Endothelial cell of umbilical vein (primary cell): ENCODE measurements at regions of chr2 and their contacts with region 1.

Region 1: DNA sequence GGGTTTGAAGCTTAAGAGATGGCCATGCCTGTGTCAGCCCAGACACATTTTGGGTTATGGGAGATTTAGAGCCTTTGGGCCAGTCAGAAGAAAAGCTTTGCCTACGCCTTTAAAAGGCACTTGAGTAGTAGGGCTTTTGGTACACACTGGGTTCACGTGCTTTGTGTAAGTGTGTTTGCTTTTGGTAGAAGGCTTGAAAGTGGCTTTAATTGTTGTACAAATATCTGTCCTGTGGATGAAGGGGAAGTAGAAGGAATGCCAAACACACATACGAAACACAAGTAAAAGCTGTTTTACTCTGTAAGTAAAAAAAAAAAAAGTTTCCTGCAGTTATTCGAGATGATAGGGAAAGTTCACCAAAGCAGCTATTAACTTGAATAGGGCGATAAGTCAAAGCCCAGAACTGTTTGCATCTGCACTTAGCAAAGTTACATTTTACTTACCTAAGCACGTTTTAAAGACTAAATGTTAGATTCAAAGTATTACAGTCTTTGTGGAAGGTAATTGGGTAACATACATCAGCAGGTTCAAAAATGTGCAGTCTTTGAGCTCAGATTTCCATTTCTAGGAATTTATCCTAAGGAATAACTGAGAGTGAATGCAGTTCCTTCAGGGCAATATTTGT is 75.4 kb downstream of the STK25 start:
- DNase-seq: no peak
- H3K4me3 ChIP-seq: no peak overlapping the region
- H3K27ac ChIP-seq: no peak overlapping the region
- H3K4me1 ChIP-seq: no peaks in the 10 kb centered on the region
- H3K27me3 ChIP-seq: no peaks in the 10 kb centered on the region
- CTCF ChIP-seq: no peak
- POLR2A ChIP-seq: no peak

Region 2: DNA sequence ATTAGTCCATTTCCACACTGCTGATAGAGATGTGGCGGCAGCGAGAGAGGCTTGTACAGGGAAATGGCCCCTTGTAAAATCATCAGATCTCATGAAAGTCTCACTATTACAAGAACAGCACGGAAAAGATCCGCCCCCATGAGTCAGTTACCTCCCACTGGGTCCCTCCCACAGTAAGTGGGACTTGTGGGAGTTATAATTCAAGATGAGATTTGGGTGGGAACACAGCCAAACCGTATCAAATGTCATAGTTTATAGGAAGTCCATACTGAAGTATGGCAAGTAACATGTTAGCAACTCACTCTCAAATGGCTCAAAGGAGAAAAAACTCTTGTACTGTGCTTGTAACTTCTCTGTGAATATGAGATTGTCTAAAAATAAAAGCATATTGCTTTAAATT is 20.8 kb before region 1 on chr2:
- CTCF ChIA-PET with region 1: no interaction called
- POLR2A ChIA-PET with region 1: no interaction called
- dilution Hi-C with region 1: no loop called
- intact Hi-C with region 1: no loop called
- DNase-seq: peak; percentile 82
- H3K4me3 ChIP-seq: no peak overlapping the region
- H3K27ac ChIP-seq: no peak overlapping the region
- H3K4me1 ChIP-seq: no peaks in the 10 kb centered on the region
- H3K27me3 ChIP-seq: no peaks in the 10 kb centered on the region
- CTCF ChIP-seq: no peak
- POLR2A ChIP-seq: no peak

Region 3: GRCh38 chr2:241443486-241444223 is 10.7 kb after region 1 on chr2:
- CTCF ChIA-PET with region 1: interaction called, 13 read pairs
- POLR2A ChIA-PET with region 1: no interaction called
- dilution Hi-C with region 1: no loop called
- intact Hi-C with region 1: no loop called
- DNase-seq: no peak
- H3K4me3 ChIP-seq: no peak overlapping the region
- H3K27ac ChIP-seq: no peak overlapping the region
- H3K4me1 ChIP-seq: no peaks in the 10 kb centered on the region
- H3K27me3 ChIP-seq: no peaks in the 10 kb centered on the region
- CTCF ChIP-seq: no peak
- POLR2A ChIP-seq: no peak